Activated naive CD4-positive, alpha-beta T cell treated with anti-CD3 and anti-CD28 coated beads for 36 hours (primary cell): ENCODE measurements at regions of chr10 and their contacts with region 1.

Region 1: DNA sequence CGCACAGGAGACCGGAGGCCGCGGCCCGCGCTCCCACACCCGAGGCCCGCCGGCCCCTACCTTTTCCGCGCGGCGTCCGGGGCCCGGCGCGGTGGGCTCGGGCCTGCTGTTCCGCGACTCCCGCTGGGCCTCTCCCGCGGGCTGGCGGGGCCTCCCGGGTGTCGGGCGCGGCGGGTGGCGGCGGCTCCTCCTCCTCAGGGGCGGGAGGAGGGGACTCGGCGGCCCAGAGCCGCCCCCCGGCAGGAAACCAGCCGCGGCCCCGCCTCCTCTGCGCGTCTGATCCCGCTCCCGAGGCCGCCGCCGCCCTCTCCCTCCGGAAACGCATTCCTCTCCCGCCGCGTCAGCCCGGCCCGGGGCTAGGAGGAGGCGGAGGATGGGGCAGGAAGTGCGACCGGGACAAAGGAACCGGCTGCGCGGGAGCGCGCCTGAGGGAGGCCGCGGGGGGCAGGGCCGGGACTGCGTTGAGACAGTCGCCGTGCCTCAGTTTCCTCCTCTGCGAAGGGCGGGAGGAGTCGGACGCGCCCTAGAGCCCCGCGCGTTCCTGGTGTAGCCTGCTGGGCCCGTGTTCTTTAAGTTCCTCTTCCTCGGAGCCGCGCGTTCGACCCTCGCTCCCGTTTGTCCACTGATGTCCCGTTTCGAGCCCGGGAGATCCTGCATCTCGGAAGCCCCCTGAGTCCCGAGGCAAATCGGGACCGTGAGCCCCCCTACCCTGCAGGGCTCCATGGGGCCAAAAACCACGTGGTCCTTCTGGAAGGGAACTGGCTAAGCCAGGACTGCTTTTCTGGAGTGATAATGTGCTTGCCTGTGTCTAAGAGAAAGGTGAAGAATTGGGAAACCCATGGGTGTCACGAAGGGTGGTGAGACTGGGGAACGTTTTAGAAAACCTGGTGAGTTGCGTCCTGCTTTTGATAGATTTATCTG is at the start of gene ITGB1:
- DNase-seq: peak; percentile 84
- H3K4me3 Mint-ChIP-seq: peak within 1 kb of the TSS; percentile 84
- H3K27ac Mint-ChIP-seq: peak within 1 kb of the TSS; percentile 89
- H3K4me1 Mint-ChIP-seq: peaks cover 40% of the 10 kb centered on the region
- H3K27me3 Mint-ChIP-seq: peaks cover 10% of the 10 kb centered on the region
- total RNA-seq, gene ITGB1: 30.3 to 34.5 TPM

Region 2: GRCh38 chr10:32055813-32056600 is 902.3 kb before region 1 on chr10 and contains the start of gene KIF5B:
- CTCF ChIA-PET with region 1: no interaction called
- intact Hi-C with region 1: loop called (anchors 5 kb)
- DNase-seq: peak; percentile 84
- H3K4me3 Mint-ChIP-seq: peak within 1 kb of the TSS; percentile 96
- H3K27ac Mint-ChIP-seq: peak within 1 kb of the TSS; percentile 92
- H3K4me1 Mint-ChIP-seq: peaks cover 39% of the 10 kb centered on the region
- H3K27me3 Mint-ChIP-seq: no peaks in the 10 kb centered on the region
- total RNA-seq, gene KIF5B: 64.9 to 67.8 TPM

Region 3: GRCh38 chr10:32445740-32446535 is 512.4 kb before region 1 on chr10 and contains the start of gene CCDC7:
- CTCF ChIA-PET with region 1: no interaction called
- intact Hi-C with region 1: loop called (anchors 10 kb)
- DNase-seq: peak; percentile 85
- H3K4me3 Mint-ChIP-seq: peak within 1 kb of the TSS; percentile 94
- H3K27ac Mint-ChIP-seq: peak within 1 kb of the TSS; percentile 98
- H3K4me1 Mint-ChIP-seq: peaks cover 14% of the 10 kb centered on the region
- H3K27me3 Mint-ChIP-seq: no peaks in the 10 kb centered on the region
- total RNA-seq, gene CCDC7: 6.8 to 8.9 TPM

Region 4: DNA sequence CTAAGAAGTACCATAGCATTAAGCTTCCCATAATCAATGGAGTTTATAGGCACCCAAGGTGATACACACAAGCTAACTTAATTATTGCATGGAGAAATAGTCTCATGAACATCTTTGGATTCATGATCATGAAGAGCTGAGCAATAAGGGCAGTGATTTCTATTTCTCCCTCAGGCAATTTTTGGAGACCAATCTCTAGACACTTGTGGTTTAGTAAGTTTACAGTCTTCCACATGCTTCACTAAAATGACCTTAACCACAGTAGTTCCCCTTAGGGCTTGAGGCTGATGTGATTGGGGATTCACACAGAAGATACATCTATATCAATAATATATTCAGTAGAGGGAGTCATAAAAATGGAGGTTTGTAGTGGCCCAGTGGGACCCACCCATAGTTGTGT is 271.2 kb before region 1 on chr10:
- CTCF ChIA-PET with region 1: no interaction called
- intact Hi-C with region 1: no loop called
- DNase-seq: no peak
- H3K4me3 Mint-ChIP-seq: no peak overlapping the region
- H3K27ac Mint-ChIP-seq: no peak overlapping the region
- H3K4me1 Mint-ChIP-seq: no peaks in the 10 kb centered on the region
- H3K27me3 Mint-ChIP-seq: no peaks in the 10 kb centered on the region

Region 5: DNA sequence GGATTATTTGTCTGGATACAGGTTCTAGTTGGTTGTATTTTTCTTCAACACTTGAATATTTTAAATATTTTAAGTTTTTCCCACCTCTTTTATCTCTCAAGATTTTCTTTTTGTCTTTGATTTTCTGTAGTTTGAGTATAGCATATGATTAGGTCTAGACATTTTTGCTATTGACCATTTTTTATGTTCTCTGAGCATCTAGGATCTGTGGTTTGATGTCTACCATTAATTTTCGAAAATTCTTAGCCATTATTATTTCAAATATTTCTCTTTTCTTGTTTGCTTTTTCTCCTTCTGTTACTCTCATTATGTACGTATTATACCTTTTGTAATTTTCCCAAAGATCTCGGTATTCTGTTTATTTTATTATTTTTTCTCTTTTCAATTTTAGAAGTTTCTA is 219.4 kb before region 1 on chr10:
- CTCF ChIA-PET with region 1: no interaction called
- intact Hi-C with region 1: no loop called
- DNase-seq: no peak
- H3K4me3 Mint-ChIP-seq: no peak overlapping the region
- H3K27ac Mint-ChIP-seq: no peak overlapping the region
- H3K4me1 Mint-ChIP-seq: no peaks in the 10 kb centered on the region
- H3K27me3 Mint-ChIP-seq: no peaks in the 10 kb centered on the region

Region 6: GRCh38 chr10:32787690-32788284 is 170.6 kb before region 1 on chr10:
- CTCF ChIA-PET with region 1: no interaction called
- intact Hi-C with region 1: no loop called
- DNase-seq: no peak
- H3K4me3 Mint-ChIP-seq: no peak overlapping the region
- H3K27ac Mint-ChIP-seq: no peak overlapping the region
- H3K4me1 Mint-ChIP-seq: no peaks in the 10 kb centered on the region
- H3K27me3 Mint-ChIP-seq: no peaks in the 10 kb centered on the region

Region 7: GRCh38 chr10:32980558-32981468 is 22.5 kb after region 1 on chr10:
- CTCF ChIA-PET with region 1: interaction called, 8 read pairs
- intact Hi-C with region 1: loop called (anchors 1 kb)
- DNase-seq: peak; percentile 90
- H3K4me3 Mint-ChIP-seq: peak overlapping the region; percentile 87
- H3K27ac Mint-ChIP-seq: peak overlapping the region; percentile 73
- H3K4me1 Mint-ChIP-seq: peaks cover 21% of the 10 kb centered on the region
- H3K27me3 Mint-ChIP-seq: no peaks in the 10 kb centered on the region

Region 8: GRCh38 chr10:33066558-33067236 is 108.4 kb after region 1 on chr10:
- CTCF ChIA-PET with region 1: no interaction called
- intact Hi-C with region 1: no loop called
- DNase-seq: no peak
- H3K4me3 Mint-ChIP-seq: no peak overlapping the region
- H3K27ac Mint-ChIP-seq: no peak overlapping the region
- H3K4me1 Mint-ChIP-seq: peaks cover 2% of the 10 kb centered on the region
- H3K27me3 Mint-ChIP-seq: no peaks in the 10 kb centered on the region

Region 9: GRCh38 chr10:33265621-33266020 is 307.3 kb after region 1 on chr10:
- CTCF ChIA-PET with region 1: no interaction called
- intact Hi-C with region 1: loop called (anchors 1 kb)
- DNase-seq: peak; percentile 84
- H3K4me3 Mint-ChIP-seq: no peak overlapping the region
- H3K27ac Mint-ChIP-seq: no peak overlapping the region
- H3K4me1 Mint-ChIP-seq: peaks cover 24% of the 10 kb centered on the region
- H3K27me3 Mint-ChIP-seq: peaks cover 17% of the 10 kb centered on the region